Posterior vena cava (tissue), 2 donors: ENCODE measurements at regions of chr2 and their contacts with region 1.

Region 1: DNA sequence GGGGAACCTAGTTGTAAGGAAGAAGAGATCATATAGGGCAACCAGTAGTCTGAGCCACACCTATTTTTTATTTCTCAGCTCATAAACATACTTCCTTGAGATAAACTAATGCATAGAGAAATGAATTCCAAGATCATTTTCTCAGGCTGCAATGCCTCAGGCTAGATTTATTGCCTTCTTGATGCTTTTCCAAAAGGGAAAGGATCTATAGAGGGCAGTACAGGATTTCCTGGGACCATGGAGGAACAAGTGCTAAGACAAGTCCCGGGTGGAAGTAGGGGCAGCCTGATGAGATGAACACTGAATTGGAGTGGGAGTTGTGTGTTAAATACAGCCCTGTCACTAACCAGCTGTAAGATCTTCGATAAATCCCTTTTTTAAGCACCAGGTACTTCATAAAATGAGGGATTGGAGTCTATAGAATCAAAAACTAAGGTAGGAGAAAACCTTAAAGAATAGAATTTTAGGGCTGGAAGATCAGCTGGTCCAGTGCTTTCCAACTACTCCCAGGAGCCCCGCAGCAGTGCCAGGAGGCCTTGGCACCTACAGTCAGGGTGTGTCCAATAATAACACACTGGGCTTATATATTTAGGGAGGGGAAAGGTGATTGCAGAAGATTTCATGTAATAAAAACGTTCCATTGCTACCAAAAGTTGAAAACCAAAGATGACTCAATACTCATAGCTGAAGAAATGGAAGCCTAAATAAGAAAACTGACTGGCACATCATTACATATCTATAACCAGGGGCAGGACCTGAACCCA is 58.1 kb downstream of the SERTAD2 start:
- DNase-seq: no peak

Region 2: GRCh38 chr2:64523666-64524603 is 71.6 kb before region 1 on chr2 and contains the start of gene AFTPH:
- intact Hi-C with region 1: no loop called
- DNase-seq: peak; percentile 99
- total RNA-seq, gene AFTPH: 18.7 to 27.8 TPM

Region 3: GRCh38 chr2:64644177-64645004 is 48.8 kb after region 1 on chr2:
- intact Hi-C with region 1: loop called in 1 of 2 experiments (anchors 10 kb)
- DNase-seq: peak; percentile 93